ENCODE measurements at regions of chr6 and their contacts with region 1.

Region 1: GRCh38 chr6:15305496-15305895 is 59.6 kb downstream of the JARID2 start:
- DNase-seq: no peak
- H3K4me3 Mint-ChIP-seq: peak overlapping the region; percentile 49
- H3K27ac Mint-ChIP-seq: peak overlapping the region; percentile 86
- H3K4me1 Mint-ChIP-seq: peaks cover 82% of the 10 kb centered on the region
- H3K27me3 Mint-ChIP-seq: no peaks in the 10 kb centered on the region

Region 2: DNA sequence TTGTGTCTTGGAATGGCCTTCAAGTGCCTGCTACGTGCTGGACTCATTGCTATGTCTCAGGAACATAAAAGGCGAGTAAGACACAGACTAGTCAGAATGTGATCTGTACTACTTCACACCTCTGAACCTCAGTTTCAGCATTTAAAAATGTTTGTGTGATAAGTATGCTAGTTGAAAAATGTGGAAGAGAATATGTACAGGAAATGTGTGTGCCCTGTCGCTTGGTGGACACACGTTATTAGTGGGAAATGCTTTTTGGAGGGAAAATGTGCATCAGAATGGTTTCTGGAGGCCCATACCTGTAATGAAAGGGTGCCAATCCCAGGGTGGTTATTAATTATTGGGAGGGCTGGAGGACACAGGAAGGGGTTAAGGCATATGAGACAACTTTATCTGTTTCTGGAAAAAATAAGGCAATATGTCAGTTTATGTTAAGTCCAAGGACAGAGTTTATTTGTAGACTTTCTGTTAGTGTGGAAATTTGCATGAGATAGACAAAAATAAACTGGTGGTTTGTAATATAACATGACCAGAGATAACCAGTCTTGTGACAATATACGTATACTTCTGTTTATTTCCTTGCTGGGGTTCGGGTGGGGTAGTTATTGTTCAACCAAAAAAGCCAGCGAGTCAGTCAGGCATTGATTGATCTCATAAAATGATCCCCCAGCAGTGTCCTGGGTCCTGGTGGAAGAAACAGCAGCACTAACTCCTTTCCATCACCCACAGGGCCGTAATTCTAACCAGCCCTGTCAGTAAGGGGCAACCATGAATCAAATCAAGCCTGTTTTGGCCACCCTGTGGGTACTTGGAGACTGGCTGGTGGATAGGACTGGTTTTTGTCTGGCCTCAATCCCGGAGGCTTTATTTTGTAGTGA is 58.3 kb after region 1 on chr6:
- intact Hi-C with region 1: loop called (anchors 2 kb)
- DNase-seq: no peak
- H3K4me3 Mint-ChIP-seq: no peak overlapping the region
- H3K27ac Mint-ChIP-seq: no peak overlapping the region
- H3K4me1 Mint-ChIP-seq: peaks cover 46% of the 10 kb centered on the region
- H3K27me3 Mint-ChIP-seq: no peaks in the 10 kb centered on the region

Measured in activated T-helper 1 cell treated with anti-CD3 and anti-CD28 coated beads, Interleukin-12 subunit alpha, Interleukin-12 subunit beta, Interleukin-2, Interleukin-4 antibody, amounts not matched to agents 30 ng/mL and 10 ng/mL and 1 ng/mL, durations not matched to agents 14 hours and 24 hours and 36 hours (primary cell).